Dendritic cell treated with granulocyte-macrophage colony-stimulating factor and Interleukin-4, amounts not matched to agents 40 ng/mL and 50 ng/mL, for 4 days (primary cell): ENCODE measurements at regions of chr19 and their contacts with region 1.

Region 1: GRCh38 chr19:3324321-3324856 is 42.0 kb upstream of the NFIC start:
- H3K4me3 Mint-ChIP-seq: no peak overlapping the region
- H3K27ac Mint-ChIP-seq: no peak overlapping the region
- H3K4me1 Mint-ChIP-seq: no peaks in the 10 kb centered on the region
- H3K27me3 Mint-ChIP-seq: peaks cover 22% of the 10 kb centered on the region

Region 2: DNA sequence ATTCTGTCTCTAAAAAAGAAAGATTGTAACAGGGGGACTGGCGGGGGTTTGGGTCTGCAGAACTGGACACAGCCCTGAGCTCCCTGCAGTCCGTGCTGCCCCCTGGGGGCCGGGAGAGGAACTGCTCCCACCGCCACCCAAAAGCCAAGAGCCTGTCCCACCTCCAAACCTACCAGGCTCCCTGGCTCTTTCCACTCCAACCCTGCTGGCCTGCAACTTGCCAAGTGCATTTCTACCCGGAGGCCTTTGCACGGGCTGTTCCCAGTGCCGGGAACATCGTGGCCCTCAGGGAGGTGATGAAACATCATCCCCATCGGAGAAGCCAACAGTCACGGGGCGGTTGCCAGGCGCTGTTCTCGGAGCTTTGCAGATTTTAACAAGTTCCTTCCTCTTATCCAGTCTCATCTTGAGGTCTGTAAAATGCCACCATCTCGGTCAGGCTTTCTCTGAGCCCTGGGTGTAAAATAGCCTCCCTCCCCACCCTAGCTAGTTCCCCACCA is 105.2 kb after region 1 on chr19:
- intact Hi-C with region 1: loop called (anchors 1 kb)
- H3K4me3 Mint-ChIP-seq: peak overlapping the region; percentile 46
- H3K27ac Mint-ChIP-seq: peak overlapping the region; percentile 66
- H3K4me1 Mint-ChIP-seq: peaks cover 60% of the 10 kb centered on the region
- H3K27me3 Mint-ChIP-seq: no peaks in the 10 kb centered on the region

Region 3: GRCh38 chr19:3440082-3440481 is 115.7 kb after region 1 on chr19:
- intact Hi-C with region 1: loop called (anchors 1 kb)
- H3K4me3 Mint-ChIP-seq: no peak overlapping the region
- H3K27ac Mint-ChIP-seq: no peak overlapping the region
- H3K4me1 Mint-ChIP-seq: peaks cover 21% of the 10 kb centered on the region
- H3K27me3 Mint-ChIP-seq: no peaks in the 10 kb centered on the region

Region 4: GRCh38 chr19:3471954-3472655 is 147.7 kb after region 1 on chr19:
- intact Hi-C with region 1: loop called (anchors 2 kb)
- H3K4me3 Mint-ChIP-seq: no peak overlapping the region
- H3K27ac Mint-ChIP-seq: no peak overlapping the region
- H3K4me1 Mint-ChIP-seq: peaks cover 5% of the 10 kb centered on the region
- H3K27me3 Mint-ChIP-seq: peaks cover 6% of the 10 kb centered on the region